B cell (primary cell): ENCODE measurements at regions of chr2 and their contacts with region 1.

Region 1: DNA sequence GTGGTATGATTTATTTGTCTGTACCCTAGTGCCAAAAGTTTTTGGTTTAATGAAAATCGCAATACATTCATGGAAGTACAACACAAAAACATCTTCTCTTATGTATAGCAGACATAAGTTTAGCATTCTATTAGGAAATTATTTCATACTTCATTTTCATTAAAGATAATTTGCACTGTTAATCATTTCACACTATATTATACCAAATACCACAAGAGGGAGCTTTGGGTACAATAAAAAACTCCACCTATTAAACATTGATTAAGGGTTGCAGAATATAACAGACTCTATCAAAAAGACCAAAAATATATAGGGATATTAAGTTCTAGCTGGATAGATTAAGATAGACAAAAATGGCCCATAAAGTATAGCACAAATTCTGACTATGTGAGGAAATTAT is 79.0 kb downstream of the SLC66A3 start:
- DNase-seq: peak; percentile 12
- ATAC-seq: no peak
- H3K4me3 ChIP-seq: no peak overlapping the region
- H3K4me3 Mint-ChIP-seq: no peak overlapping the region
- H3K27ac ChIP-seq: no peak overlapping the region
- H3K27ac Mint-ChIP-seq: no peak overlapping the region
- H3K4me1 ChIP-seq: no peaks in the 10 kb centered on the region
- H3K4me1 Mint-ChIP-seq: peaks cover 6% of the 10 kb centered on the region
- H3K27me3 ChIP-seq: no peaks in the 10 kb centered on the region
- H3K27me3 Mint-ChIP-seq: no peaks in the 10 kb centered on the region
- CTCF ChIP-seq: peak; percentile 53

Region 2: DNA sequence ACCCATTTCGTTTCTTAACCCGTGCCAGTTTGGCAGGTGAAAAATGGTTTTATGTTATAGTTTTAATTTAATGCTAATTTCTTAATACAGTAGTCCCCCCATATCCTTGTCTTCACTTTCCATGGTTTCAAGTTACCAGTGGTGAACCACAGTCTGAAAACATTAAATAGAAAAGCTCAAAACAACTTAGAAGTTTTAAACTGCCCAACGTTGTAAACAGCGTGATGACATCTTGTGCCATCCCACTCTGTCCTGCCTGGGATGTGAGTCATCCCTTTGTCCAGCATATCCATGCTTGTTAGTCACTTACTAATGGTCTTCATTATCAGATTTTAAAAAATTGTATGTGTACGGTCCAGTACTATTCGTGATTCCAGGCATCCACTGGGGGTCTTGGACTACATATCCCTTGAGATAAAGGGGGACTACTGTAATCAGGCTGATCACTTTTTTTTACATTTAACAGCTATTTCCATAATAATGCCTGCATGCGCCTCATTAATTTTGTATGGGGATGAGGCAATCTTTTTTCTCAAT is 47.2 kb before region 1 on chr2:
- CTCF ChIA-PET with region 1: no interaction called
- POLR2A ChIA-PET with region 1: no interaction called
- intact Hi-C with region 1: no loop called
- DNase-seq: no peak
- ATAC-seq: no peak
- H3K4me3 ChIP-seq: no peak overlapping the region
- H3K4me3 Mint-ChIP-seq: no peak overlapping the region
- H3K27ac ChIP-seq: no peak overlapping the region
- H3K27ac Mint-ChIP-seq: no peak overlapping the region
- H3K4me1 ChIP-seq: no peaks in the 10 kb centered on the region
- H3K4me1 Mint-ChIP-seq: no peaks in the 10 kb centered on the region
- H3K27me3 ChIP-seq: no peaks in the 10 kb centered on the region
- H3K27me3 Mint-ChIP-seq: no peaks in the 10 kb centered on the region
- CTCF ChIP-seq: no peak

Region 3: DNA sequence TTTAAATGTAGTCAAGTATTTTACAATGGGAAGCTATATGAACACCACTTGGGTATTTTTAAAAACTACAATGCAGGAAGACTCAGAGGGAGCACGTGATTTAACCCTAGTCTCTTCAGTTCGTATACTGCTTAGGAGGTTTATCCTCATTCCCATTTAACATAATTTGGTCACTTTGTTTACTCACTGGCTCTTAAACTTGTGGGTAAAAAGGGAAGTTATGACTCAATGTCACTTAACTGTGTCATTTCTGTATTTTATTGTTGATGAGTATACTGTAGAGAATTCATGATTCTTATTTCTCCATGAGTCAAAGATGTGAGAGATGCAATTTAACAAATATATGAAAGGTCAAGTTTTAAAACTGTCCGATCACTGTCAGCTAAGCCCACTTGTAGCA is 30.8 kb before region 1 on chr2:
- CTCF ChIA-PET with region 1: no interaction called
- POLR2A ChIA-PET with region 1: no interaction called
- intact Hi-C with region 1: no loop called
- DNase-seq: no peak
- ATAC-seq: no peak
- H3K4me3 ChIP-seq: no peak overlapping the region
- H3K4me3 Mint-ChIP-seq: no peak overlapping the region
- H3K27ac ChIP-seq: no peak overlapping the region
- H3K27ac Mint-ChIP-seq: no peak overlapping the region
- H3K4me1 ChIP-seq: no peaks in the 10 kb centered on the region
- H3K4me1 Mint-ChIP-seq: peaks cover 6% of the 10 kb centered on the region
- H3K27me3 ChIP-seq: no peaks in the 10 kb centered on the region
- H3K27me3 Mint-ChIP-seq: no peaks in the 10 kb centered on the region
- CTCF ChIP-seq: no peak

Region 4: DNA sequence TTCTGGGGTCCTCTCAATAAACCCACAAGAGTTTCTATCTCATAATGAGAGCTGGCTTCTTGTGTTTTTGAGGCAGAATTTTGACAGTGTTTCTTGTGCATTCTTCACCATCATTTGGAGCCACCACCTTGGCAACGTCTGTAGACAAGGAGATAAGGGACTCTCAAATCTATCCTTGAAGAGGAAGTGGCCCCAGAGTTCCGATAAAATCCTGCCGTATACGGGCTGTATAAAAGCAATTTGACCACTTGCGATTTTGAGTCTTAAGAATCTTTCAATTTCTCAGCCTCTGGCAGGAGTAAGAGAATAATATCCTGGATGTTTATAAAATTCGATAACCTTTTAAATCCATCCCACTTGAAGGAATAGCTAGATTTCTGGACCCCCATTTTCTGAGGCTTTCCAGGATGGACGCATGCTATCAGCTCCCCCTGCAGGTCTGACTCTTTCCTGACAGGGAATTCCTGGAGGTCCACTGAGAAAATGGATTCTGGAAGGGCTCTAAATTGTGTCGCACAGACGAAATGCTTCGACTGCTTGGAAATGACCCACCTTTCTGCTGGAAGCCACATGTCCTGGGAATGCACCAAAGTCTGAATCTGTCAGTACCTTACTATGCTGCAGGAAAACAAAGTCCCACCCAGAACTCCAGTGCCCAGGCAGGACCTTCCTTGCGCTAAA is 177.6 kb after region 1 on chr2:
- CTCF ChIA-PET with region 1: interaction called, 48 read pairs
- POLR2A ChIA-PET with region 1: no interaction called
- intact Hi-C with region 1: no loop called
- DNase-seq: peak; percentile 22
- ATAC-seq: no peak
- H3K4me3 ChIP-seq: peak overlapping the region in 1 of 5 experiments; percentile 15
- H3K4me3 Mint-ChIP-seq: no peak overlapping the region
- H3K27ac ChIP-seq: no peak overlapping the region
- H3K27ac Mint-ChIP-seq: no peak overlapping the region
- H3K4me1 ChIP-seq: no peaks in the 10 kb centered on the region
- H3K4me1 Mint-ChIP-seq: no peaks in the 10 kb centered on the region
- H3K27me3 ChIP-seq: peaks cover 0 to 14% (median 5%) of the 10 kb centered on the region in 4 experiments
- H3K27me3 Mint-ChIP-seq: peaks cover 28% of the 10 kb centered on the region
- CTCF ChIP-seq: peak; percentile 34

Region 5: GRCh38 chr2:11446733-11447248 is 212.5 kb after region 1 on chr2:
- CTCF ChIA-PET with region 1: interaction called, 23 read pairs
- POLR2A ChIA-PET with region 1: no interaction called
- intact Hi-C with region 1: loop called (anchors 1 kb)
- DNase-seq: peak; percentile 74
- ATAC-seq: peak; percentile 51
- H3K4me3 ChIP-seq: no peak overlapping the region
- H3K4me3 Mint-ChIP-seq: no peak overlapping the region
- H3K27ac ChIP-seq: no peak overlapping the region
- H3K27ac Mint-ChIP-seq: no peak overlapping the region
- H3K4me1 ChIP-seq: no peaks in the 10 kb centered on the region
- H3K4me1 Mint-ChIP-seq: no peaks in the 10 kb centered on the region
- H3K27me3 ChIP-seq: no peaks in the 10 kb centered on the region
- H3K27me3 Mint-ChIP-seq: no peaks in the 10 kb centered on the region
- CTCF ChIP-seq: peak; percentile 89

Region 6: GRCh38 chr2:11495844-11496681 is 261.8 kb after region 1 on chr2:
- CTCF ChIA-PET with region 1: no interaction called
- POLR2A ChIA-PET with region 1: no interaction called
- intact Hi-C with region 1: no loop called
- DNase-seq: no peak
- ATAC-seq: no peak
- H3K4me3 ChIP-seq: no peak overlapping the region
- H3K4me3 Mint-ChIP-seq: no peak overlapping the region
- H3K27ac ChIP-seq: no peak overlapping the region
- H3K27ac Mint-ChIP-seq: no peak overlapping the region
- H3K4me1 ChIP-seq: no peaks in the 10 kb centered on the region
- H3K4me1 Mint-ChIP-seq: peaks cover 2% of the 10 kb centered on the region
- H3K27me3 ChIP-seq: peaks cover 0 to 3% (median 0%) of the 10 kb centered on the region in 4 experiments
- H3K27me3 Mint-ChIP-seq: peaks cover 17% of the 10 kb centered on the region
- CTCF ChIP-seq: no peak

Region 7: DNA sequence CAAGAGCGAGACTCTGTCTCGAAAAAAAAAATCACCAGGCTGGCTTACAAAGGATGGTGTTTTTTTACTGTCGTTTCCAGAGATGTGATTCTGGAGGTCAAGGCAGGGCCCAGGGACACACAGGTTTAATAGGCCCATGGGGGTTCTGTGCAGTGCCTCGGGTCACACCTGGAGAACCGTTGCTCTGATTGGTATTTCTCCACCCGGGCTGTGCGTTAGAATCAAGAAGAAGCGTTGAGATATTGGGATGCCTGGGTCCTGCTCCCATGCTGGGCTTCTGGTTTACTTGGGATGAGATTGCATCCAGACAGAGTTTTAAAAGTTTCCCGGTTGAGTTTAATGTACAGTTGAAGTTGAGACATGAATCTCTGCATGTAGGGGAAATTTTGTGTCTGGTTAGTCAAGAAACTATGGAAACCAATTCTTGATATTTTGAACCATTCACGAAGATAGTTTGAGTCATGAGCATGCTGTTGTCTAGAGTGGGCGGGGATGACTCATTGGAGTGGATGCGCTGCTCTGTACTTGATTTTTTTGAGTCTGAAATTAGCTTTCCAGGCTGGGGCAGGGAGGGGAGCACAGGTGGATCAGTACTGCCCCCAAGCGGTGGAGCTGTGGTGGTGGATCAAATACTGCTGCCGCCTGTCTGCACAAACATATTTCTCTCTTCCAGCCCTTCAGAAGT is 349.7 kb after region 1 on chr2:
- CTCF ChIA-PET with region 1: no interaction called
- POLR2A ChIA-PET with region 1: no interaction called
- intact Hi-C with region 1: loop called (anchors 5 kb)
- DNase-seq: peak; percentile 49
- ATAC-seq: peak; percentile 49
- H3K4me3 ChIP-seq: no peak overlapping the region
- H3K4me3 Mint-ChIP-seq: no peak overlapping the region
- H3K27ac ChIP-seq: no peak overlapping the region
- H3K27ac Mint-ChIP-seq: no peak overlapping the region
- H3K4me1 ChIP-seq: no peaks in the 10 kb centered on the region
- H3K4me1 Mint-ChIP-seq: no peaks in the 10 kb centered on the region
- H3K27me3 ChIP-seq: peaks cover 0 to 12% (median 3%) of the 10 kb centered on the region in 4 experiments
- H3K27me3 Mint-ChIP-seq: peaks cover 16% of the 10 kb centered on the region
- CTCF ChIP-seq: peak; percentile 68